Activated T-helper 2 cell treated with anti-CD3 and anti-CD28 coated beads, Interferon-gamma antibody, Interleukin-2, Interleukin-4, amounts not matched to agents 10 μg/mL and 5 μg/mL and 100 μg/mL, durations not matched to agents 14 hours and 24 hours and 36 hours (primary cell): ENCODE measurements at regions of chr10 and their contacts with region 1.

Region 1: GRCh38 chr10:58220769-58221451 is 46.8 kb downstream of the IPMK start:
- DNase-seq: no peak
- H3K4me3 Mint-ChIP-seq: no peak overlapping the region
- H3K27ac Mint-ChIP-seq: no peak overlapping the region
- H3K4me1 Mint-ChIP-seq: peaks cover 3% of the 10 kb centered on the region
- H3K27me3 Mint-ChIP-seq: no peaks in the 10 kb centered on the region

Region 2: GRCh38 chr10:57979466-57979865 is 241.4 kb before region 1 on chr10:
- intact Hi-C with region 1: no loop called
- DNase-seq: no peak
- H3K4me3 Mint-ChIP-seq: no peak overlapping the region
- H3K27ac Mint-ChIP-seq: no peak overlapping the region
- H3K4me1 Mint-ChIP-seq: no peaks in the 10 kb centered on the region
- H3K27me3 Mint-ChIP-seq: no peaks in the 10 kb centered on the region

Region 3: DNA sequence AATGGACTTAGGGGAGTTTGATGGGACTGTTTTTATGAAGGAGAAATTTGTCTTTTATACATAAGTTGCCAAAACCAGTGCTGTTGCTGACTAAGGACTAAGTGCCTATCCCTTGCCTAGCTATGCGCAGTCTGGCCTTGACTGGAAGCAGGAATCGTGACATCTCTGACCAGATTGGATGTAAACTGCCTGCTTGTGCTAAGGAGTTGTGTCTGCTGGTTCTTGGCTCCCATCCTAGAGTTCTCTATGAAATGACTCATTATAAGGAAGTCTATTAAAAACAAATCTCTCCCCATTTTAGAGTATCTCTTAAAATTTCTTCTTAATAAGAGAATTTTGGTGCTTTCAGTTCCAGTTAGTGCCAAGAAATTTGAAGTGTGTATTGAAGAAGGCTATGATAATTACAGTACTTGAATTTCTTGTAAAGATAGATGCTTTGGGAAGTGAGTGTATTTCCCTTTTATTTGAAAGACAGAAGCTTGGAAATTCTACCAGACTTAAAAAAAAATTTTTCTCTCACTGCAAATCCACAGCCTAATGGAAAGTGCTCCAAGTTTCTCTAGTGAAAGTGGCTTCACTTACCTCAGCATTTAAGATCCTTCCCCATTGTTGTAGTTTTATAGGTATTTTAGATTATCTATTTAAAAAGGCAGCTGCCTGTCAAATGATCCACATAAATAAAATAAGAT is 369.4 kb after region 1 on chr10:
- intact Hi-C with region 1: loop called (anchors 5 kb)
- DNase-seq: no peak
- H3K4me3 Mint-ChIP-seq: no peak overlapping the region
- H3K27ac Mint-ChIP-seq: no peak overlapping the region
- H3K4me1 Mint-ChIP-seq: no peaks in the 10 kb centered on the region
- H3K27me3 Mint-ChIP-seq: no peaks in the 10 kb centered on the region